ENCODE measurements at regions of chr5 and their contacts with region 1.

Region 1: GRCh38 chr5:132526290-132526973 is 16.9 kb downstream of the IL5 start:
- DNase-seq: no peak
- H3K4me3 ChIP-seq: peak overlapping the region; percentile 6; the same call in 1 of the 2 replicates
- CTCF ChIP-seq: peak; percentile 53

Region 2: GRCh38 chr5:132426525-132427138 is 99.8 kb before region 1 on chr5:
- CTCF ChIA-PET with region 1: interaction called, 10 read pairs
- POLR2A ChIA-PET with region 1: no interaction called
- DNase-seq: peak; percentile 76
- H3K4me3 ChIP-seq: no peak overlapping the region; the same call in 1 of the 2 replicates
- CTCF ChIP-seq: peak; percentile 56

Region 3: GRCh38 chr5:132437604-132438266 is 88.7 kb before region 1 on chr5:
- CTCF ChIA-PET with region 1: no interaction called
- POLR2A ChIA-PET with region 1: no interaction called
- DNase-seq: peak; percentile 85
- H3K4me3 ChIP-seq: no peak overlapping the region
- CTCF ChIP-seq: no peak

Region 4: DNA sequence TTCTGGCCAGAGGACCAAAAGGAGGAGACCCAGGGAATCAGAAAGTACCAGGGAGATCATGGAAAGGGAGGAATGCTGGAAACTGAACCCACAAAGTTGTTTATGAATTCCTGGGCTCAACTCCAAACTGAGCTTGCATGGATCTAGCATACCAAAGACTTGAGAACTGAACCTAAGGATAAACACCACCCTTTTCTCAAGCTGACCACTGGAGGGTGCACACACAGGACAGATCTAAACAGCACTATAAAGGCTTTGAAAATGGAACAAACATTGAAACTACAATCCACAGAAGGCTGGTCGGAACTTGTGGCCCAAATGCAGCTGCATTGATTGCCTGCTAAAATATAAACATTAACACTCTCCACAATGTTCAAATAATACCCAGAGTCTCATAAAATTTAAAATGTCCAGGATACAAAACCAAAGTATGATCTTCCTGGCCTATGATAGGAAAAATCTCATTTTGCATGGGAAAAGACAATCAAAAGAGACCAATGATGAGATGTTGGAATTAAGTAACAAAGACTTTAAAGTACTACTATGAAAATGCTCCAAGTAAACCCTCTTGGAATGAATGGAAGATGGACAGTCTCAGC is 20.2 kb before region 1 on chr5:
- CTCF ChIA-PET with region 1: interaction called, 24 read pairs
- POLR2A ChIA-PET with region 1: no interaction called
- DNase-seq: peak; percentile 93
- H3K4me3 ChIP-seq: 0 out of 2 replicates have a peak overlapping the region, but pooled peaks have one; percentile 8
- CTCF ChIP-seq: peak; percentile 79

Region 5: DNA sequence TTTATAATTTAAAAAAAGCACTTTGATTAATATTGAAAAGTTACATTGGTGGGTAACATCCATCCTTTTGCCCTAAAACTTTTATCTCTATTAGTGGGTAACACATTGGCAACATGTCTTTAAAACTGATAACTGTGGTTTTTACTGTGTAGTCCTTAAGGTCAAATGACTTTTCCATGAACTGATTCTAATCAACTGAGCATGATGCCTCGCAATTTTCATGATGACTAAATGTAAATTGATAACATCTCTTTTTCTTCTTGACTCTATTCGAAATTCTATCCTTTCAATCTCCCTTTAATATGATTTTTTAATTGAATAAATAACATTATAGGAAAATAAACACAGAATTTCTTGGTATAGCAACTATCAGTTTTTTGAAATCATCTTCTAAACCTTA is 23.1 kb after region 1 on chr5:
- CTCF ChIA-PET with region 1: interaction called, 16 read pairs
- POLR2A ChIA-PET with region 1: no interaction called
- DNase-seq: no peak
- H3K4me3 ChIP-seq: no peak overlapping the region
- CTCF ChIP-seq: no peak

Region 6: DNA sequence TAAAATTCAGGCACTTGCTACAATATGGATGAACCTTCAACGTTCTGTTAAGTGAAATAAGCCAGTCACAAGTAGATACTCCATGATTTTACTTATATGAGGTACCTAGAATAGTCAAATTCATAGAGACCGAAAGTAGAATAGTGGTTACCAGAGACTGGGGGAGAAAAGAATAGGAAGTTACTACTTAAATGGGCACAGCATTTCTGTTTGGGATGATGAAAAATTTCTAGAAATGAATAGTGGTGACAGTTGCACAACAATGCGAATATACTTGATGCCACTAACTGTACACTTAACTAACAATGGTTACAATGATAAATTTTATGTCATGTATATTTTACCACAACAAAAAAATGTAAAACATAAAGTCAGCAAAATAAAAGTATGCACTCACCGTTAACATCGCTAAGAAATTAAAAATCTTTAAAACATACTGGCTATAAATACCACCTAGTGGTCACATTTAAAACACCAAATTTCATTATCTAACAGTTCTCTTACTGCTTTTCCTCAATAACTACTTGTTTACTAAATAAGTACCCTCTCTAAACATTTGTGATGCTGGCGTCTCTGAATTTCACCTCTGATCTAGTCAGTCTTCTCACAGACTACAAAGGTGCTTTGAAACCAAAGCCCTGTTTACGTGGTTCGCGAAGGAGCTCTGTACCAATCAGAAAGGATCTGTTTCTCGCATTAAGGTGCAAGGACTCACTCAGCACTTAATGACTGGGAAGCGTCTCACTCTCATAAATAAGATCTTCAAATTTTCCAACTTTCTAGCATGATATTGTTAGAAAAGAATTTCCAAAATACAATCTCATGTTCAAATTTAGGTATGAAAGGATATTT is 188.2 kb after region 1 on chr5:
- CTCF ChIA-PET with region 1: interaction called, 30 read pairs
- POLR2A ChIA-PET with region 1: no interaction called
- DNase-seq: no peak
- H3K4me3 ChIP-seq: no peak overlapping the region
- CTCF ChIP-seq: no peak

Measured in AG04449 (cell line).